Activated naive CD4-positive, alpha-beta T cell treated with anti-CD3 and anti-CD28 coated beads, Interleukin-2, amount 10 ng/mL, durations not matched to agents 7 days and 5 days (primary cell): ENCODE measurements at regions of chr1 and their contacts with region 1.

Region 1: DNA sequence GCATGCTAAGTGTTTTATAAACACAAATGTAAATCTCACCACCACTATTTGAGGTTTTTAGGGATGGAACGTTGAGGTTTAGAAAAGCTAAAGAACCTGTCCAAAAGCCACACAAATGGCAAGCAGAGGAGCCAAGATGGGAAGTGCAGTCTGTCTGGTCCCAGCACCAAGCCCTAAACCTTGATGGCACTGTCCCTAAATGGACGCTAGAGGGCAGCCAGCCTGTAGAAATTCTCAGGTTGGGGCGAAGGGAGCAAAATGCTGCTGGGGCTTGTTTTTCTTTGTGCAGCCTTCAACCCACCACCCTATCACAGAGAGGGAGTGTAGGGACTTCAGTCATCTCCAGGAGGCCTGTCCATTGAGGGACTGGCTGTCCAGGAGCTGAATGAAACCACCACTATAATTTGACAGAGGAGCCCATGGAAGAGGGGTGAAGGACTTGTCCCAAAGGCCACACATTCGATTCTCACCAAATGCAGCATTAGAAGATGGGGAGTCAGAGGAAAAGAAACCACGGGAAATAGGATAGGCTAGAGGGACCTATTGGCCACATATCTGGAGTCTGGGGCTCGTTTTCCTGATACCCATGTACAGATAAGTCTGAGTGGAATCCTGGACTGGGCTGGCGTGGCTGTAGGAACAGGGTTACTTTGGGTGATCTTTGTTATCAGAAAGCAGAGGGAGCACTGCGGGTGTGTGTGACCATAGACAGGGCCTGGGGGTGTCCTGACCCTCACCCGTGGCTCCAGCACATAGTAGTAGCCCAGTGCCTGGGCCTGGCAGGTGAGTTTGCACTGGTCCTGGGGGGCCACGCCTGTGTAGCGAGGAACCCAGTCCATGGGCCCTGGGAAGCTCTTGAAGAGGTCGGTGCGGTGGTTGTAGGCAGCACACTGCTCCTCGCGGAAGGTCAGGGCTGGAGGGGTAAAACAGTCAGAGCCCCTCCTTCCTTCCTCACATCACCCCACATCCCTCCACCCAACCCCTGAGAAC is 6.1 kb downstream of the ADAMTS4 start:
- DNase-seq: peak; percentile 78
- H3K4me3 Mint-ChIP-seq: no peak overlapping the region
- H3K27ac Mint-ChIP-seq: peak overlapping the region; percentile 86
- H3K4me1 Mint-ChIP-seq: peaks cover 62% of the 10 kb centered on the region
- H3K27me3 Mint-ChIP-seq: no peaks in the 10 kb centered on the region

Region 2: GRCh38 chr1:161165742-161166668 is 26.8 kb before region 1 on chr1 and contains the start of gene PPOX:
- CTCF ChIA-PET with region 1: interaction called, 21 read pairs
- DNase-seq: peak; percentile 97
- H3K4me3 Mint-ChIP-seq: peak within 1 kb of the TSS; percentile 74
- H3K27ac Mint-ChIP-seq: peak within 1 kb of the TSS; percentile 97
- H3K4me1 Mint-ChIP-seq: peaks cover 45% of the 10 kb centered on the region
- H3K27me3 Mint-ChIP-seq: no peaks in the 10 kb centered on the region

Region 3: DNA sequence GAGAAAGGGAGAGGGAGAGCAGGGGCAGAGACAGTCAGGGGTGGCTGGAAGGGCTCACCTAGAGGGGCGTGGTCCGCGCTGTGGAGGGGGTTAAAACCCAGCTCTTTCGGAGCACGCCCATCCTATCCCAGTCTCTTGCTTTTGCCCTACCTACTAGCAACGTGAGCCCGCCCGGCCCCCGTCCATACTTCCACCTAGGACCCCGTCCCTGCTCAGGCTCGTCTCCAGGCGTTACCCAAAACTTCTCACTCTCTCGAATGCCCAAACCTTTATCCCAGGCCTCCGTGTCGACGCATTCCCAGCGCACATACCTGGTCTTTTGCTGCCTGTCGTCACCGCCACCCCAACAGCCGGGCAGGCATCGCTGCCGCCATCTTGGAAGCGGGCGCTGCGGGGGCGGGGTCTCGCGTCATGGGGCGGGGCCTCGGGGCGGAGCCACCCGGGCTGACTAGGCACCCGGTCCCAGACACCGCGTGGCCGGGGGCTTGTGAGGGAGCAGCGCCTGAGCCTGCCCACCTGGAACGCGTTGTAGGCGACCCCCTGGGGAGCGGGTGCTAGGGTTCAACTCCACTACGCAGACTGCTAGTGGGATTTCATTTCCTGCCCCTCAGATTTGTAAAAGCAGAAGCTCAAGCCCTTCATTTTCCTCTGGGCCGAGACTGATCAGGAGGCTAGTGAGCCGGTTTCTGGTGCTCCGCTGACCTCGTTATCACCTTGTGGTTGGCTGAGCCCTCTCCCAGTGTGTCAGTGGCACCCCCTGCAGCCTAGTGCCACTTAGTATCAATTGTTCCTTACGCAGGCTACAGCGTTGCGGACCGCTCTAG is 15.4 kb before region 1 on chr1 and contains the start of gene B4GALT3:
- CTCF ChIA-PET with region 1: interaction called, 53 read pairs
- DNase-seq: peak; percentile 96
- H3K4me3 Mint-ChIP-seq: peak within 1 kb of the TSS; percentile 94
- H3K27ac Mint-ChIP-seq: peak within 1 kb of the TSS; percentile 95
- H3K4me1 Mint-ChIP-seq: peaks cover 72% of the 10 kb centered on the region
- H3K27me3 Mint-ChIP-seq: no peaks in the 10 kb centered on the region

Region 4: DNA sequence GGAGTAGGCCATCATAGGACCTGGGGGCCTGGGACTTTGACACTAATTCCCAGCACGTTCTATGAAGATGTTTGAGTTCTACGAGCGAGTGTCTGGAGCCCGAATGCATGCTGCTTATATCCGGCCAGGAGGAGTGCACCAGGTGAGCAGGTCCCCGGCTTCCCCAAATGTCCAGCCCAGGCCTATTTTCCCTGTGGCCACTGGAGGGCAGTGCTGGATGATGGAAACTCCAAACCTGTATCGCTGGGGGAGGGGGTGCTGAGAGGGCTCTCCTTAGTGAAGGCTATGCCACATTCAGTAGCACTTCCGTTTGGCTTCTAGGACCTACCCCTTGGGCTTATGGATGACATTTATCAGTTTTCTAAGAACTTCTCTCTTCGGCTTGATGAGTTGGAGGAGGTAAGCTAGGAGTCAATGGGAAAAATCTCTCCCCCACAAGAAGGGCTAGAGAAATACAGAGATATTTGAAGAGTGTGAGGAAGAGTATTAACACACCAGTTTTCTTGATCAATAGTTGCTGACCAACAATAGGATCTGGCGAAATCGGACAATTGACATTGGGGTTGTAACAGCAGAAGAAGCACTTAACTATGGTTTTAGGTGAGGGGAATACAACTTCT is 17.1 kb after region 1 on chr1:
- CTCF ChIA-PET with region 1: interaction called, 11 read pairs
- DNase-seq: peak; percentile 83
- H3K4me3 Mint-ChIP-seq: no peak overlapping the region
- H3K27ac Mint-ChIP-seq: peak overlapping the region; percentile 82
- H3K4me1 Mint-ChIP-seq: peaks cover 47% of the 10 kb centered on the region
- H3K27me3 Mint-ChIP-seq: no peaks in the 10 kb centered on the region

Region 5: DNA sequence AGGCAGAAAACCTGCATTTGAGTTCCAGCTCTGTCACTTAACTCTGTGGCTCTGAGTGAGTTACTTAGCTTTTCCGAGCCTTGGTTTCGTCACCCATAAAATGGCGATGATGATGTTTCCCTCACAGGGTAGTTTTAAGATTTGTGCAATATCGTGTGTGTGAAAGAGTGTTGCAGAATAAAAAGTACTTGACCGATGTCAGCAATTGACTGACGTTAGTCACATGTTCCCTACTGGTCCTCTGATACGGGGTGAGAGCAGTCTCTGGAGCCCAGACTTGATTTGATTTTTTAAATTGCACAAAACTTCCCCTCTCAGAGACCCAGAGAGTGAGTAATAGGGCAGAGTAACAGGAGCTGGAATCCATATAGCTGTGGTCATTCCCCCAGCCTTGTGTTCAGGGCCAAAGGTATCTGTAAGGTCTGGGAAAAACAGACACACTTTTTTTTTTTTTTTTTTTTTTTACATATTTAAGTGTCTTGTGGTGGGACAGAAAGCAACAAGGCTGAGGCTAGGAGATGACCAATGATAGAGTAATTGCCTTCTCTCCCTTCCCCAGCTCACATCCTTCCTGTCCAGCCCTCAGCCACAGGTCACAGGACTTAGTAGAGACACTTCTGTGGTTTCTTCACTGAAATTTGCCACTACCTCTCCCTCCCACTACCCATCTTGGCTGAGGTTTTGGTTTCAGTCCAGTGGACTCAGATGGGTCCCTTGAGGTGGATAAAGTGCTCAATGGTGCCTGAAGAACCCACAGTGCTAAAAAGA is 24.4 kb after region 1 on chr1:
- CTCF ChIA-PET with region 1: interaction called, 21 read pairs
- DNase-seq: no peak
- H3K4me3 Mint-ChIP-seq: no peak overlapping the region
- H3K27ac Mint-ChIP-seq: no peak overlapping the region
- H3K4me1 Mint-ChIP-seq: peaks cover 52% of the 10 kb centered on the region
- H3K27me3 Mint-ChIP-seq: peaks cover 5% of the 10 kb centered on the region